CD8-positive, alpha-beta T cell (primary cell): ENCODE measurements at regions of chr12 and their contacts with region 1.

Region 1: DNA sequence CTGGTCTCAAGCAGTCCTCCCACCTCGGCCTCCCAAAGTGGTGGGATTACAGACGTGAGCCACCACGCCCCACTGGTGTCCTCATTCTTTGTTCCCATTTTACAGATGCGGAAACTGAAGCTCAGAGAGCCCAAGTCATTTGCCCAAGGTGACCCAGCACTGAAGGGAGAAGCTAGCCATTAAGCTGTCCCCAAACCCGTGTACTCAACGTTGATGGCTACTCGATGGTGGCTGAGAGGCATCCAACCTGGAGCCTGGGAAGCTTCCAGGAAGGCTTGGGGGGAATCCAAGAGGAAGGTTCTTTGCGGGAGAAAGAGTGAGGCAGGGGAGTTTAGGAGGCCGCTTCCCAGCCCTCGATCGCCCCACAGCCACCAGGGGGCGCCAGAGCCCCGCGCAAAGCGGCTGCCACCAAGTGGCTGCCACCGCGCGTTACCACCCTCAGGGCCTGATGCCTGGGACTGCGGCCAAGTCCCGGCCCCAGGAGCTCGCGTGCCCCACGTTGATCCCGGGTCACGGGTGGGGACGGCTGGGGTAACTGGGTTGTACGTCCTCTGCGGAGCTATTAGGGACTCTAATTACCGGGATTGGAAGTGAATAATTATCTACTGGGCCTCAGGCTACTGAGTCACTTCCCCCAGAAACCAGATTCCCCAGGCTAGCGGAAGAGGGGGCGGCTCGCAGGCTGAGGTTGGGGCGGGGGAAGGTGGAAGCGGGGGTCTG is 8.8 kb upstream of the SH2B3 start:
- DNase-seq: peak; percentile 75 to 95 (median 88)
- ATAC-seq: peak; percentile 94
- H3K4me3 ChIP-seq: peak overlapping the region; percentile 27 to 33
- H3K4me3 Mint-ChIP-seq: peak overlapping the region; percentile 70
- H3K27ac ChIP-seq: no peak overlapping the region
- H3K27ac Mint-ChIP-seq: no peak overlapping the region
- H3K4me1 ChIP-seq: peaks cover 9% of the 10 kb centered on the region
- H3K4me1 Mint-ChIP-seq: peaks cover 6% of the 10 kb centered on the region
- H3K27me3 ChIP-seq: no peaks in the 10 kb centered on the region
- H3K27me3 Mint-ChIP-seq: no peaks in the 10 kb centered on the region
- CTCF ChIP-seq: peak; percentile 97

Region 2: GRCh38 chr12:111353603-111354295 is 43.1 kb before region 1 on chr12:
- CTCF ChIA-PET with region 1: no interaction called
- POLR2A ChIA-PET with region 1: no interaction called
- intact Hi-C with region 1: no loop called
- DNase-seq: no peak
- ATAC-seq: no peak
- H3K4me3 ChIP-seq: no peak overlapping the region
- H3K4me3 Mint-ChIP-seq: no peak overlapping the region
- H3K27ac ChIP-seq: no peak overlapping the region
- H3K27ac Mint-ChIP-seq: no peak overlapping the region
- H3K4me1 ChIP-seq: no peaks in the 10 kb centered on the region
- H3K4me1 Mint-ChIP-seq: no peaks in the 10 kb centered on the region
- H3K27me3 ChIP-seq: no peaks in the 10 kb centered on the region
- H3K27me3 Mint-ChIP-seq: no peaks in the 10 kb centered on the region
- CTCF ChIP-seq: no peak

Region 3: GRCh38 chr12:111418594-111418880 is 21.7 kb after region 1 on chr12:
- CTCF ChIA-PET with region 1: interaction called, 107 read pairs
- POLR2A ChIA-PET with region 1: no interaction called
- intact Hi-C with region 1: no loop called
- DNase-seq: no peak
- ATAC-seq: no peak
- H3K4me3 ChIP-seq: no peak overlapping the region
- H3K4me3 Mint-ChIP-seq: no peak overlapping the region
- H3K27ac ChIP-seq: no peak overlapping the region
- H3K27ac Mint-ChIP-seq: no peak overlapping the region
- H3K4me1 ChIP-seq: peaks cover 4% of the 10 kb centered on the region
- H3K4me1 Mint-ChIP-seq: peaks cover 39% of the 10 kb centered on the region
- H3K27me3 ChIP-seq: no peaks in the 10 kb centered on the region
- H3K27me3 Mint-ChIP-seq: no peaks in the 10 kb centered on the region
- CTCF ChIP-seq: no peak

Region 4: GRCh38 chr12:111451649-111452129 is 54.8 kb after region 1 on chr12:
- CTCF ChIA-PET with region 1: interaction called, 1,191 read pairs
- POLR2A ChIA-PET with region 1: interaction called, 20 read pairs
- intact Hi-C with region 1: loop called (anchors 1 kb)
- DNase-seq: peak in 2 of 9 experiments; percentile 72 to 79
- ATAC-seq: peak; percentile 71
- H3K4me3 ChIP-seq: no peak overlapping the region
- H3K4me3 Mint-ChIP-seq: no peak overlapping the region
- H3K27ac ChIP-seq: no peak overlapping the region
- H3K27ac Mint-ChIP-seq: peak overlapping the region; percentile 5
- H3K4me1 ChIP-seq: no peaks in the 10 kb centered on the region
- H3K4me1 Mint-ChIP-seq: peaks cover 20% of the 10 kb centered on the region
- H3K27me3 ChIP-seq: no peaks in the 10 kb centered on the region
- H3K27me3 Mint-ChIP-seq: no peaks in the 10 kb centered on the region
- CTCF ChIP-seq: peak; percentile 84

Region 5: GRCh38 chr12:111482462-111482861 is 85.6 kb after region 1 on chr12:
- CTCF ChIA-PET with region 1: interaction called, 27 read pairs
- POLR2A ChIA-PET with region 1: interaction called, 3 read pairs
- intact Hi-C with region 1: loop called in 1 of 2 experiments (anchors 1 kb)
- DNase-seq: peak in 2 of 9 experiments; percentile 10 to 33
- ATAC-seq: no peak
- H3K4me3 ChIP-seq: no peak overlapping the region
- H3K4me3 Mint-ChIP-seq: no peak overlapping the region
- H3K27ac ChIP-seq: no peak overlapping the region
- H3K27ac Mint-ChIP-seq: no peak overlapping the region
- H3K4me1 ChIP-seq: no peaks in the 10 kb centered on the region
- H3K4me1 Mint-ChIP-seq: no peaks in the 10 kb centered on the region
- H3K27me3 ChIP-seq: no peaks in the 10 kb centered on the region
- H3K27me3 Mint-ChIP-seq: no peaks in the 10 kb centered on the region
- CTCF ChIP-seq: peak; percentile 19

Region 6: GRCh38 chr12:111673503-111673902 is 276.6 kb after region 1 on chr12:
- CTCF ChIA-PET with region 1: interaction called, 6 read pairs
- POLR2A ChIA-PET with region 1: no interaction called
- intact Hi-C with region 1: loop called in 1 of 2 experiments (anchors 2 kb)
- DNase-seq: peak in 1 of 9 experiments; percentile 14
- ATAC-seq: no peak
- H3K4me3 ChIP-seq: no peak overlapping the region
- H3K4me3 Mint-ChIP-seq: no peak overlapping the region
- H3K27ac ChIP-seq: no peak overlapping the region
- H3K27ac Mint-ChIP-seq: no peak overlapping the region
- H3K4me1 ChIP-seq: no peaks in the 10 kb centered on the region
- H3K4me1 Mint-ChIP-seq: peaks cover 2% of the 10 kb centered on the region
- H3K27me3 ChIP-seq: no peaks in the 10 kb centered on the region
- H3K27me3 Mint-ChIP-seq: no peaks in the 10 kb centered on the region
- CTCF ChIP-seq: no peak